ENCODE measurements at regions of chr13 and their contacts with region 1.

Region 1: DNA sequence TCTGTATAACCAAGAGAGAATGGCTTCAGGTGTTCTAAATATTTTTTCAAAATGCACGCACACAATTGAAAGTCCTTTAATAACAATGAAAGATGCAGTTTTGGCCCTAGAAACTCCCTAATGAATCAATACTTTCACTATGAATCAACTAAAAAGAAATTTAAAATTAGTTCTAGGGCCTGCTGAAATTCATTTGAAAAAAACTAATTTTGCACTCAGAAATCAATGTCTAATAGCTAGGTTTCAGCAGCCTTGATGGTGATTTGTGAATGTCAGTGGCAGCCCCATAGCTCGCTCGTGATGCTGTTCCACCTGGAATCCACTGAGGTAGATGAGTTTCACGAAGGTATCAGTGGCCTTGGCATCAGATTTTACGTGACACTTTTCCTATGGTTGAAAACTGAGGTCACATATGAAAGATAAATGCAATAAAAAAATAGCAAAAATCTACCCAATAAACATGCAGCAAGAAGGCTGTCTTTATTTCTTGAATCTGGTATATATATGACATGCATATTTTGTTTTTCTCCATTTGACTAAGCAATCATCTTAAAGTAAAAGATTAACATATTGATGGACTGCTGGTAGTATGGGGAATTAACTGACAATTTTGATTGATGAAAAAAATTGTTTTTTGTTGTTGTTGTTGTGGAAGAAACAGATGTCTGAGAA is 141.0 kb downstream of the AKAP11 start:
- DNase-seq: no peak
- ATAC-seq: no peak
- H3K4me3 ChIP-seq: no peak overlapping the region
- H3K4me3 Mint-ChIP-seq: no peak overlapping the region
- H3K27ac ChIP-seq: no peak overlapping the region
- H3K27ac Mint-ChIP-seq: no peak overlapping the region
- H3K4me1 ChIP-seq: no peaks in the 10 kb centered on the region
- H3K4me1 Mint-ChIP-seq: no peaks in the 10 kb centered on the region
- H3K27me3 ChIP-seq: no peaks in the 10 kb centered on the region
- H3K27me3 Mint-ChIP-seq: no peaks in the 10 kb centered on the region
- CTCF ChIP-seq: no peak

Region 2: DNA sequence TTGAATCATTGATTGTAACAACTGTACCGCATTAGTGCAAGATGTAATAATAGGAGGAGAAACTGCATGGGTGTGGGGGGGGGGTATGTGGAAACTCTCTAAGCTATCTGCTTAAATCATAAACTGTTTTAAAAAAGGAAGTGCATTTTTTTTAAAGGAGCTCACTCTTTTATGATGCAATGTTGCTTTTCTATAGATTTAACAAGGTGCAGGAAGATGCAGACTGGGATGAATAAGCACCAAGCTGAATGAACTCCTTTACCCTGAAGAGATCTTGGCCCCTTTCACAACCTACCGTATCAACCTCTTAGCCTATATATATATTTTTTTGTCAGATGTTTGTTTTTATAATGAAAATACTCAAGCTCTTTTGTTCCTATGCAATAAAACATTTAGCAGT is 45.1 kb before region 1 on chr13:
- CTCF ChIA-PET with region 1: no interaction called
- POLR2A ChIA-PET with region 1: no interaction called
- intact Hi-C with region 1: loop called (anchors 5 kb)
- DNase-seq: no peak
- ATAC-seq: no peak
- H3K4me3 ChIP-seq: no peak overlapping the region
- H3K4me3 Mint-ChIP-seq: no peak overlapping the region
- H3K27ac ChIP-seq: no peak overlapping the region
- H3K27ac Mint-ChIP-seq: no peak overlapping the region
- H3K4me1 ChIP-seq: peaks cover 0 to 6% of the 10 kb centered on the region in 2 donors
- H3K4me1 Mint-ChIP-seq: peaks cover 13% of the 10 kb centered on the region
- H3K27me3 ChIP-seq: no peaks in the 10 kb centered on the region
- H3K27me3 Mint-ChIP-seq: no peaks in the 10 kb centered on the region
- CTCF ChIP-seq: no peak

Measured in B cell (primary cell).